ENCODE measurements at regions of chr7 and their contacts with region 1.

Region 1: DNA sequence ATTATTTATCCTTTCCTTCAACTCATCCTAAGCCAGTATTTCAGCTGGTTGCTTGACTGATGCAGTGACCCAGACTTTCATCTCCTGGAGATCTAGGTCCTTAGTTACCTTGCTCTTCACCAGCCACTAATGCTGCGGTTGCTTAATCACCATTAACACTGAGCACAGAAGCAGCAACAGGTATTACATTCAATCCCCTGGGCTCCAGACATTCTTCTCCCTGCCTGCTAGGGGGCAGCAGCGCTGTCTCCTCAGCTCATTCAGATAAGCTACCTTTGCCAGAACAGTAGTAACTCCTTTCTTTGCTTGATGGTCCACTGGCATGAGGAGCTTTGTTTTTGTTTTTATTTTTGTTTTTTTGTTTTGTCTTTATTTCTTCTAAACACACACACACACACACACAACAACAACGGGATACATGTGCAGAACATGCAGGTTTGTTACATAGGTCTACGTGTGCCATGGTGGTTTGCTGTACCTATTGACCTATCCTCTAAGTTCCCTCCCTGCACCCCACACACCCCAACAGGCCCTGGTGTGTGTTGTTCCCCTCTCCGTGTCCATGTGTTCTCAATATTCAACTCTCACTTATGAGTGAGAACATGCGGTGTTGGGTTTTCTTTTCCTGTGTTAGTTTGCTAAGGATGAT is 1043.2 kb upstream of the C7orf33 start:
- DNase-seq: peak; percentile 48
- H3K4me3 ChIP-seq: no peak overlapping the region
- H3K27ac ChIP-seq: no peak overlapping the region
- H3K4me1 ChIP-seq: no peaks in the 10 kb centered on the region
- H3K27me3 ChIP-seq: no peaks in the 10 kb centered on the region
- CTCF ChIP-seq: peak; percentile 67 to 72

Region 2: DNA sequence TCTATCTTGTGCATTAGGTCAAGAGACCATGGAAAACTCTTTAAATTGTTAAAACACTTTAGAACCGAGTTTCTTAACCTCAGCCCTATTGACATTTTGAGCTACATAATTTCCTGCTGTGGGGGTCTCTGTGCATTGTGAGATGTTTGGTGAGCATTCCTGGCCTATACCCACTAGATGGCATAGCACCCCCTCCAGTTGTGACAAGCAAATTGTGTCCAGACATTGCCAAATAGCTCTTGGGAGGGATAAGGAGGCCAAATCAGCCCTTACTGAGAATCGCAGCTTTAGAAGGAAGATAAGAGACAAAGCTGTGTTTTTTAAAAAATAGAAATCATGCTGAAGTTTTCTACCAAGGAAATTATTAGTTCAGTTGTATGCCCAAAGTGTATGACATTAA is 115.3 kb before region 1 on chr7:
- CTCF ChIA-PET with region 1: no interaction called
- dilution Hi-C with region 1: no loop called
- in situ Hi-C with region 1: no loop called
- intact Hi-C with region 1: loop called (anchors 10 kb)
- DNase-seq: no peak
- H3K4me3 ChIP-seq: no peak overlapping the region
- H3K27ac ChIP-seq: no peak overlapping the region
- H3K4me1 ChIP-seq: no peaks in the 10 kb centered on the region
- H3K27me3 ChIP-seq: no peaks in the 10 kb centered on the region
- CTCF ChIP-seq: peak in 1 of 2 donors; percentile 24

Region 3: DNA sequence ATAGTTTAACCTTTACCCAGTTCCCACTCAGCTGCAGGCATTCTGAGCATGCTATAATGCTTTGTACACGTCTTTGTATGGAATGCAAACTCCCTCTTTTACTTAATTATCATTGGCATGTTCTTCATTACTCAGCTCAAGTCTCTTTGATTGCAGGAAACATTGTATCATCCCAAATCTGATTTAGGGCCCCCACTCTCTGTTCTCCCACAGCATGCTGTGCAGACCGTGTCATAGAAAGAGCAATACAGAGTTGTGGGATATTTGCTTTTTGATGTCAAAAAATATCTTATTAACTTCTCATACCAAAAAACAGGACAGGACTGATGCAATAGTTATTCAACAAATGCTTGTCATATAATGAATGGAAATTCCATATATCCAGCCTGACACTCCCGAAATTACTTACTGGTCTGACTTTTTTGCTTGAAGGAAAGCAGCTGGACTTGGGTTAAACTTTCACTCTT is 38.3 kb before region 1 on chr7:
- CTCF ChIA-PET with region 1: no interaction called
- dilution Hi-C with region 1: no loop called
- in situ Hi-C with region 1: no loop called
- intact Hi-C with region 1: no loop called
- DNase-seq: peak; percentile 17
- H3K4me3 ChIP-seq: no peak overlapping the region
- H3K27ac ChIP-seq: no peak overlapping the region
- H3K4me1 ChIP-seq: peaks cover 13% of the 10 kb centered on the region
- H3K27me3 ChIP-seq: no peaks in the 10 kb centered on the region
- CTCF ChIP-seq: no peak

Region 4: GRCh38 chr7:147658392-147658967 is 111.1 kb after region 1 on chr7:
- CTCF ChIA-PET with region 1: no interaction called
- dilution Hi-C with region 1: no loop called
- in situ Hi-C with region 1: no loop called
- intact Hi-C with region 1: no loop called
- DNase-seq: no peak
- H3K4me3 ChIP-seq: no peak overlapping the region
- H3K27ac ChIP-seq: no peak overlapping the region
- H3K4me1 ChIP-seq: no peaks in the 10 kb centered on the region
- H3K27me3 ChIP-seq: no peaks in the 10 kb centered on the region
- CTCF ChIP-seq: no peak

Region 5: DNA sequence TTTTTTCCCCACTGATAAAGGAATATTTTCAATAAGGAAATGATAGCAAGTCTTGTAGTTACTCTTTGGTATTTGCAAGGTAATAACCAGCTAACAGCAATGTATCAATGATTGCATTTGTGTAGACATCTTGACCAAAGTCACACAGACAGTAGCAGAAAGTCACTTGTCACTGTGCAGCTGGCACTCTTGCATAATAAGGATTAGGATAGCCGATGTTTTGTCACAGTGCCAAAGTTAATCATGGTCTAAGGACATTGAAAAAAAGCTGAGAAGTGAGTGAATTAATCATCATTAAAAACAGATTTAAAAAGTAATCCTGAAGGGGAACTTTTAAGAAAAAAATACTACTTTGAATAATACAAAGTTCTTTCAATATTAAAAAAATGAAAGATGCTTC is 208.9 kb after region 1 on chr7:
- CTCF ChIA-PET with region 1: no interaction called
- dilution Hi-C with region 1: no loop called
- in situ Hi-C with region 1: no loop called
- intact Hi-C with region 1: no loop called
- DNase-seq: no peak
- H3K4me3 ChIP-seq: no peak overlapping the region
- H3K27ac ChIP-seq: no peak overlapping the region
- H3K4me1 ChIP-seq: no peaks in the 10 kb centered on the region
- H3K27me3 ChIP-seq: no peaks in the 10 kb centered on the region
- CTCF ChIP-seq: no peak

Region 6: GRCh38 chr7:148084138-148084537 is 536.8 kb after region 1 on chr7:
- CTCF ChIA-PET with region 1: no interaction called
- dilution Hi-C with region 1: no loop called
- in situ Hi-C with region 1: no loop called
- intact Hi-C with region 1: loop called (anchors 1 kb)
- DNase-seq: peak; percentile 5
- H3K4me3 ChIP-seq: no peak overlapping the region
- H3K27ac ChIP-seq: no peak overlapping the region
- H3K4me1 ChIP-seq: no peaks in the 10 kb centered on the region
- H3K27me3 ChIP-seq: no peaks in the 10 kb centered on the region
- CTCF ChIP-seq: peak; percentile 16 to 64

Region 7: GRCh38 chr7:148242294-148242801 is 695.0 kb after region 1 on chr7:
- CTCF ChIA-PET with region 1: no interaction called
- dilution Hi-C with region 1: no loop called
- in situ Hi-C with region 1: no loop called
- intact Hi-C with region 1: loop called (anchors 1 kb)
- DNase-seq: peak; percentile 55
- H3K4me3 ChIP-seq: no peak overlapping the region
- H3K27ac ChIP-seq: no peak overlapping the region
- H3K4me1 ChIP-seq: no peaks in the 10 kb centered on the region
- H3K27me3 ChIP-seq: no peaks in the 10 kb centered on the region
- CTCF ChIP-seq: peak; percentile 88

Measured in mammary epithelial cell (primary cell).